Activated naive CD4-positive, alpha-beta T cell treated with anti-CD3 and anti-CD28 coated beads for 36 hours (primary cell): ENCODE measurements at regions of chr20 and their contacts with region 1.

Region 1: GRCh38 chr20:34781220-34781619 is 44.2 kb downstream of the NCOA6 start:
- DNase-seq: no peak
- H3K4me3 Mint-ChIP-seq: no peak overlapping the region
- H3K27ac Mint-ChIP-seq: no peak overlapping the region
- H3K4me1 Mint-ChIP-seq: no peaks in the 10 kb centered on the region
- H3K27me3 Mint-ChIP-seq: no peaks in the 10 kb centered on the region

Region 2: GRCh38 chr20:34768096-34768495 is 13.1 kb before region 1 on chr20:
- CTCF ChIA-PET with region 1: interaction called, 13 read pairs
- intact Hi-C with region 1: no loop called
- DNase-seq: no peak
- H3K4me3 Mint-ChIP-seq: no peak overlapping the region
- H3K27ac Mint-ChIP-seq: no peak overlapping the region
- H3K4me1 Mint-ChIP-seq: no peaks in the 10 kb centered on the region
- H3K27me3 Mint-ChIP-seq: no peaks in the 10 kb centered on the region